Aorta (tissue), 5 donors: ENCODE measurements at regions of chr1 and their contacts with region 1.

Region 1: DNA sequence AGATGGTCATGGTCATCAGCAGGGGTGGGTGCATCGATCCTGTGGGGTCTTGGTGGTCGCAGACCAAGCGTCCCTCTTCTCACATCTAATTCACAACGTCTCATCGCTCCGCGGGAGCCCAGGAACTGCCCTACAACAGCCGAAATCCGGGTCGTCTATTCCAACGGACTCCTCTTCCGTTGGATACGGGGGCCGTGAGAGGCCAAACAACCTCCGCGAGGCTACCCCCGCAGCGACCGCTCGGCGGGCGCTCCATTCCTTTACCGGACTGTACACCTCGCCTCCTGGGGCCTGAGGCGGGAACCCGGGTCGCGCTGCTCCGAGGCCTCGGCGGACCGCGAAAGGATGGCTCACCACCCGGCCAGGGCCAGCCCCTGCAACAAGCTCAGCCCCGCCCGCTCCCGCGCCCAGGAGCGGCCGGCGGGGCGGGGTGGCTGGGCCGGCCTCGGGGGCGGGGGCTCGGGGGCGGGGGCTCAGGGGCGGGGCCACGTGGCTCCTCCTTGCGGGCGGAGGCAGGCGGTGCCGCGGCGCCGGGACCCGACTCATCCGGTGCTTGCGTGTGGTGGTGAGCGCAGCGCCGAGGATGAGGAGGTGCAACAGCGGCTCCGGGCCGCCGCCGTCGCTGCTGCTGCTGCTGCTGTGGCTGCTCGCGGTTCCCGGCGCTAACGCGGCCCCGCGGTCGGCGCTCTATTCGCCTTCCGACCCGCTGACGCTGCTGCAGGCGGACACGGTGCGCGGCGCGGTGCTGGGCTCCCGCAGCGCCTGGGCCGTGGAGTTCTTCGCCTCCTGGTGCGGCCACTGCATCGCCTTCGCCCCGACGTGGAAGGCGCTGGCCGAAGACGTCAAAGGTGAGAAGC is at the start of gene QSOX1:
- DNase-seq: peak; percentile 93 to 96
- ATAC-seq: peak; percentile 95
- H3K4me3 ChIP-seq: peak within 1 kb of the TSS; percentile 71 to 81
- H3K27ac ChIP-seq: peak within 1 kb of the TSS in 1 of 2 donors; percentile 55
- H3K4me1 ChIP-seq: peaks cover 0 to 4% of the 10 kb centered on the region in 2 donors
- H3K27me3 ChIP-seq: no peaks in the 10 kb centered on the region
- total RNA-seq, gene QSOX1: 88.2 to 95.1 TPM

Region 2: GRCh38 chr1:179882243-179883039 is 272.1 kb before region 1 on chr1 and contains the start of gene TOR1AIP1:
- intact Hi-C with region 1: loop called in 1 of 2 experiments (anchors 5 kb)
- DNase-seq: peak; percentile 99
- ATAC-seq: peak; percentile 98
- H3K4me3 ChIP-seq: peak within 1 kb of the TSS; percentile 55 to 63
- H3K27ac ChIP-seq: peak within 1 kb of the TSS; percentile 25 to 89
- H3K4me1 ChIP-seq: no peaks in the 10 kb centered on the region
- H3K27me3 ChIP-seq: no peaks in the 10 kb centered on the region
- total RNA-seq, gene TOR1AIP1: 68.3 to 68.4 TPM